ENCODE measurements at regions of chr1 and their contacts with region 1.

Region 1: DNA sequence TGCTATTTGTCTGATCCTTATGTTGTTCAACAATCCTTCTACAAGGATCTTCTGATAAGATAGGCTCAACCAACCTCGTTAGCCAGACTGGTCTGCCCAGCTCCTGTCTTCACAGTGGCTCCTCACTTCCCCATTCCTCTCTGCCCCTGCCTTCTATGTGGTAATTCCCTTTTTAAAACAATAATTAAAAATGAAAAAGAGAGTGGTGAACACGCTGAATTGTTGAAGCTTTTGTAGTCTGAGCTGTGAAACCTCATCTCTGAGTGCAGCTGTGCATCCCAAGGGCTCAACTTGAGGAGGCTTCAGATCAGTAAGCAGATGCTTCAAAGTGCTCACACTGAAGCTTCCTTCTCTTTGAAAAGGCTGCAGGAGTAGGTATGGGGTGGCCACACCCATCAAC is 70.7 kb upstream of the JUN start:
- DNase-seq: no peak

Region 2: GRCh38 chr1:58380345-58380744 is 474.2 kb before region 1 on chr1:
- intact Hi-C with region 1: loop called in 1 of 2 experiments (anchors 5 kb)
- DNase-seq: no peak

Region 3: GRCh38 chr1:58870296-58870676 is 15.7 kb after region 1 on chr1:
- intact Hi-C with region 1: loop called in 1 of 2 experiments (anchors 1 kb)
- DNase-seq: no peak

Region 4: GRCh38 chr1:58883037-58883887 is 28.7 kb after region 1 on chr1:
- intact Hi-C with region 1: no loop called
- DNase-seq: peak; percentile 93